ENCODE measurements at regions of chr13 and their contacts with region 1.

Region 1: DNA sequence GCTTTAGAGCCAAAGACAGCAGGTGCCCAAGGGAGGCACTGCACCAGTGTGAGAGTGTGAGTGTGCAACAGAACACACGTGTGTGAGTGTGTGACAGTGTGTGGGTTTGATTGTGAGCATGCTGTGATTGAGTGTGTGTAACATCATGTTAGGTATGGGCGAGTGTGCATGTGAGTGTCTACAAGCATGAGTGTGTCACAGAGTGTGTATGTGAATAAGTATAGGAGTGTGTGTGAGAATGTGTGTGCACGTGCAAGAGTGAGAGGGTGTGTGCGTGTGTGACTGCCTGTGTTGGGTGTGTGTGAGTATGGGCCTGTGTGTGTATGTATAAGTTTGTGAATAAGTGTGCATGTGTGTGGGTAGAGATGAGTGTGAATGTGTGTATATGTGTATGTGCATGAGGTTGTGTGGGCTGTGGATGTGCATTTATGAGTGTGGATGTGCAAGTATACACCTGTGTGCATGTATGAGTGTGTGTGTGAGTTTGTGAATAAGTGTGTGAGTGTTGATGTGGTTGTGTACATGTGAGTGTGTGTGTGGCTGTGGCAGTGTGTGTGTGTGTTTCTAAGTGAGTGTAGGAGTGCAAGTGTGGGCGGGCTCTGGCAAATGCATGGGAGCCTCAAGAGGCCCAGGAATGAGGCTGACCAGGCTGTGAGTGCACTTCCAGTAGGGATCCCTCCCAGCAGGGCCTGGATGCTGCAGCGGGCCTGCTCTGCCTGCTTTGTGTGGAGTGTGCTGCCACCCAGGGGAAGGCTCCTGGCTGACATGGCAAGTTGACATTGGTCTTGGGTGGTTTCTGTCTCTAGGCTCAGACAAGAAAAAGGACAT is 198.4 kb downstream of the COL4A1 start:
- DNase-seq: peak; percentile 80 to 81
- ATAC-seq: peak; percentile 85 to 94 (median 90)
- H3K4me3 ChIP-seq: no peak overlapping the region
- H3K27ac ChIP-seq: peak overlapping the region in 8 of 10 donors; percentile 32 to 85 (median 66)
- H3K4me1 ChIP-seq: peaks cover 4 to 50% (median 21%) of the 10 kb centered on the region in 9 donors
- H3K27me3 ChIP-seq: no peaks in the 10 kb centered on the region
- CTCF ChIP-seq: peak; percentile 34 to 83 (median 63)

Region 2: DNA sequence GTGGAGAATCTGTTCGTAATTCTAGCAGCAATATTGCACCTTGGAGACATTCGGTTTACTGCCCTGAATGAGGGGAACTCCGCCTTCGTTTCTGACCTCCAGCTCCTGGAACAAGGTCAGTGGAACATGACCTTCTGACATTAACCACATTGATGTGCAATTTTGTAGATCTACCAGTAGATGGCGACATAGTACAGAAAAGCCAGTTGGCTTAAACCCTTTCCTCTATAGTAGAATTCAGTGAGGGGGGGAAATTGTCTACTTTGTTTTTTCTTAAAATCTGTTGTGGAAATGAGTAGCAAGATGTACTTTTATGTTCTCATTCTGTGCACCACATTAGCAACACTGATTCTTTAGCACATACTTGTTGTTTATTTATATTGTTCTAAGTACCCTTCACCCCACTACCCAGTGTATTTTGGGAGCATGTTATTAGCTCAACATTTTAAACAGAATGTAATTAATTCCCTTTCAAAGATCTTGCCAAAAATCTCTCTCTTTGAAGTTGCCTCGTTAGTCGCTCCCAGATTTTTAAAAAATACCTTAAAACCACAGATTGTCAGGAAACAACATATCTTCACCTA is 1146.9 kb before region 1 on chr13:
- intact Hi-C with region 1: loop called (anchors 5 to 10 kb)
- DNase-seq: no peak
- ATAC-seq: peak; percentile 77 to 88 (median 82)
- H3K4me3 ChIP-seq: no peak overlapping the region
- H3K27ac ChIP-seq: no peak overlapping the region
- H3K4me1 ChIP-seq: no peaks in the 10 kb centered on the region
- H3K27me3 ChIP-seq: no peaks in the 10 kb centered on the region
- CTCF ChIP-seq: peak; percentile 72 to 92 (median 88)

Region 3: GRCh38 chr13:109786457-109787134 is 322.0 kb before region 1 on chr13 and contains the start of gene IRS2:
- intact Hi-C with region 1: loop called (anchors 5 to 10 kb)
- DNase-seq: peak; percentile 91
- ATAC-seq: peak; percentile 79 to 88 (median 85)
- H3K4me3 ChIP-seq: peak within 1 kb of the TSS; percentile 70 to 91 (median 84)
- H3K27ac ChIP-seq: peak within 1 kb of the TSS; percentile 83 to 98 (median 91)
- H3K4me1 ChIP-seq: peaks cover 0 to 52% (median 31%) of the 10 kb centered on the region in 9 donors
- H3K27me3 ChIP-seq: peaks cover 0 to 28% (median 11%) of the 10 kb centered on the region in 7 donors
- CTCF ChIP-seq: no peak
- total RNA-seq, gene IRS2: 10.2 to 49.3 (median 13.7) TPM

Region 4: GRCh38 chr13:109874484-109875454 is 233.8 kb before region 1 on chr13:
- intact Hi-C with region 1: loop called in 6 of 10 experiments (anchors 5 to 10 kb)
- DNase-seq: no peak
- ATAC-seq: peak; percentile 44 to 89 (median 76)
- H3K4me3 ChIP-seq: no peak overlapping the region
- H3K27ac ChIP-seq: peak overlapping the region in 9 of 10 donors; percentile 24 to 90 (median 75)
- H3K4me1 ChIP-seq: peaks cover 0 to 40% (median 17%) of the 10 kb centered on the region in 9 donors
- H3K27me3 ChIP-seq: no peaks in the 10 kb centered on the region
- CTCF ChIP-seq: no peak

Region 5: GRCh38 chr13:110150384-110151101 is 42.0 kb after region 1 on chr13:
- intact Hi-C with region 1: no loop called
- DNase-seq: no peak
- ATAC-seq: peak in 3 of 8 donors; percentile 7 to 47 (median 8)
- H3K4me3 ChIP-seq: no peak overlapping the region
- H3K27ac ChIP-seq: no peak overlapping the region
- H3K4me1 ChIP-seq: no peaks in the 10 kb centered on the region
- H3K27me3 ChIP-seq: no peaks in the 10 kb centered on the region
- CTCF ChIP-seq: no peak

Region 6: DNA sequence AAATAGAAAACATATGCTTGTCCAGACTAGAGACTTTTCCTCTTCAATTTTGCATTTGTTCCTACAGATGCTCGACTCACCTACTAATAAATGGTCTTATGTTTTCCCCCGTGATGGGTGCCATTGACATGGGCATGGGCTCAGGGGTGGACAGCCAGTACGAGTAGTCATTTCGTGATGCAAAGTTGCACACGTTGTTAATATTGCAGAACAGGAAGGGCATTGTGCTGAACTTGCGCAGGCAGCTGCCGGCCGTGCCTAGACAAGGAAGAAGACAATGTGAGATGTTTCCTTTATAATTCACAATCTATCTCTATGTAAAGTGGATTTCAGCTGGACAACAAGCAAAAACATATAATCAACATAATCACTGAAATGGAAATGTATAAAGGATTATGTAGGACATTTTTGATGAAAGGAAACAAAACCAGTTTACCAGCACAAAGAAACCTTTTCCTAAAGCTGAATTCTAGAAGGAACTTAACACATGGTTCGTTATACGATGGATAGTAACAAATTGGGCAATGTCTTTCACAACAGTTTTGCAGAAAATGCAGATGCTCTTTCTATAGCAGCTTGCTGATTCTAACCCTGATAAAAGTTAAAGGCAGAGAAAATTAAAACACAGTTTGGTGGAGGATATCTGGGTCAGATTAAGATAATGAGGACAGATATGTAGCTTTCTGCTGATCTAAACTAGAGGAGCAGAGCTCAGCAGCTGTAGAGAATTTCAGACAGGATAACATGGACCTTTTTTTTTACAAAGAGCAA is 52.7 kb after region 1 on chr13:
- intact Hi-C with region 1: loop called in 1 of 10 experiments (anchors 10 kb)
- DNase-seq: no peak
- ATAC-seq: peak in 3 of 8 donors; percentile 29 to 54 (median 45)
- H3K4me3 ChIP-seq: no peak overlapping the region
- H3K27ac ChIP-seq: peak overlapping the region in 2 of 10 donors; percentile 3 to 83
- H3K4me1 ChIP-seq: peaks cover 0 to 55% (median 13%) of the 10 kb centered on the region in 9 donors
- H3K27me3 ChIP-seq: no peaks in the 10 kb centered on the region
- CTCF ChIP-seq: no peak